ENCODE measurements at regions of chr20 and their contacts with region 1.

Region 1: GRCh38 chr20:13119583-13119982 is 101.5 kb upstream of the ISM1 start:
- DNase-seq: peak in 1 of 2 donors; percentile 40
- ATAC-seq: peak in 6 of 8 donors; percentile 27 to 88 (median 65)
- H3K4me3 ChIP-seq: no peak overlapping the region
- H3K27ac ChIP-seq: no peak overlapping the region
- H3K4me1 ChIP-seq: no peaks in the 10 kb centered on the region
- H3K27me3 ChIP-seq: peaks cover 0 to 4% (median 0%) of the 10 kb centered on the region in 7 donors
- CTCF ChIP-seq: peak; percentile 67 to 92 (median 87)

Region 2: GRCh38 chr20:12956303-12956702 is 163.3 kb before region 1 on chr20:
- intact Hi-C with region 1: no loop called
- DNase-seq: no peak
- ATAC-seq: no peak
- H3K4me3 ChIP-seq: no peak overlapping the region
- H3K27ac ChIP-seq: no peak overlapping the region
- H3K4me1 ChIP-seq: no peaks in the 10 kb centered on the region
- H3K27me3 ChIP-seq: peaks cover 0 to 4% (median 0%) of the 10 kb centered on the region in 7 donors
- CTCF ChIP-seq: no peak

Region 3: DNA sequence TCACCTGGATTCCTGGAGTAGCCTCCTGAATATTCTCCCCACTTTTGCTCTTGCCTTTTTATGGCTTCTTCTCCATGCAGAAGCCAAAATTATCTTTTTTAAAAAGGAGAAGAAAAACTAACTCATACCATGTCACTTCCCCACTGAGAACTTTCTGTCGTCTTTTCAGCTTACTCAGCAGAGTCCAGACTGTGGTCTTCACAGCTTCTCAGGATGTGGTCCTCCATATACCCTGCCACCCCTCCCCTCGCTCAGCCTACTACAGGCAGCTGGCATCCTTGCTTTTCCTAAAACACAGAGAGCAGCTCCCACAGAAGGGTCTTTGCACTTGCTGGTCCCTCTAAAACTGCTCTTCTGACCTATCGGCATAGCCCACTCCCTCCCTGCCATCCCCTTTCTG is 12.1 kb after region 1 on chr20:
- intact Hi-C with region 1: no loop called
- DNase-seq: no peak
- ATAC-seq: peak in 2 of 8 donors; percentile 25 to 53
- H3K4me3 ChIP-seq: no peak overlapping the region
- H3K27ac ChIP-seq: no peak overlapping the region
- H3K4me1 ChIP-seq: no peaks in the 10 kb centered on the region
- H3K27me3 ChIP-seq: no peaks in the 10 kb centered on the region
- CTCF ChIP-seq: no peak

Region 4: DNA sequence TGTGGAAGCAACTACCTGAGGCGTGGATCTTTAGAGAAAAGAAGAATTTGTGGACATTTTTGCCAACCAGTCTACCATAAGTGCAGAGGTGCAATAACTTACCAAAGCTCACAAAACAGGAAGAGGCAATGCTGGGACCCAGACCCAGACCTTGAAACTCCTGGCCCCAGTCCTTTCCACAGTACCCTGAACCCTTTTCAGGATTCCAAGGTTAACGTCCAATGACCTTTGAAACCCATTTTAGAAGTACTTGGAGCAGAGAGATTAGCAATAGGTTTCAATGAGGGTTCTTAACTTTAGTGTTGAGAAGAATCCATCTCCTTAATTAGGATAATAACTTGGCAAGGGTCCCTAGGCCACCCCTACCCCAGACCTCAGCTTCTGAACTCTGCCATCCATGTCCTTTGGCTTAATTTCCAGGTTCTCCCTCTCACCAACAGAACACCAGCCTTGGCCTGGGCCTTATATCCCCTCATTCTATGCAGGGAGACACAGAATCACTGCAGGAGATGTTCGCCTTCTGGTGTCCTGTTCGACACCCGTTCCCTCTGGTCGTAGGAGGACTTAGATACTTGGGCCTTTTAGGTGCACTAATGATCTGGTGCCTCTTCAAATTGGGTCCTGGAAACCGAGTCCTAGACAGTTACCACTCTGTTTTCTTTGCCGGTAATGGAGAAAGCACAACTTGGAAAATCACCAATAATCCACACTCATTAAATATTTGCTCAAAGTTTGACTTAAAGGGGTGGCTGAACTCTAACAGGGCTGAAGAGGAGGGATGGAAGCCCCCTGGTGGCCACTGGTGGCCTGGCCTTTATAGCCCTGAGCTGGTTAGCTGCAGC is 142.1 kb after region 1 on chr20:
- intact Hi-C with region 1: loop called in 8 of 10 experiments (anchors 5 to 10 kb)
- DNase-seq: peak; percentile 40 to 46
- ATAC-seq: peak in 7 of 8 donors; percentile 69 to 93 (median 77)
- H3K4me3 ChIP-seq: no peak overlapping the region
- H3K27ac ChIP-seq: no peak overlapping the region
- H3K4me1 ChIP-seq: peaks cover 0 to 4% (median 0%) of the 10 kb centered on the region in 9 donors
- H3K27me3 ChIP-seq: no peaks in the 10 kb centered on the region
- CTCF ChIP-seq: peak; percentile 44 to 78 (median 71)

Region 5: GRCh38 chr20:13302647-13303450 is 183.3 kb after region 1 on chr20:
- intact Hi-C with region 1: loop called in 8 of 10 experiments (anchors 2 to 10 kb)
- DNase-seq: no peak
- ATAC-seq: peak in 5 of 8 donors; percentile 41 to 61 (median 50)
- H3K4me3 ChIP-seq: no peak overlapping the region
- H3K27ac ChIP-seq: no peak overlapping the region
- H3K4me1 ChIP-seq: no peaks in the 10 kb centered on the region
- H3K27me3 ChIP-seq: no peaks in the 10 kb centered on the region
- CTCF ChIP-seq: peak; percentile 44 to 70 (median 59)

Region 6: DNA sequence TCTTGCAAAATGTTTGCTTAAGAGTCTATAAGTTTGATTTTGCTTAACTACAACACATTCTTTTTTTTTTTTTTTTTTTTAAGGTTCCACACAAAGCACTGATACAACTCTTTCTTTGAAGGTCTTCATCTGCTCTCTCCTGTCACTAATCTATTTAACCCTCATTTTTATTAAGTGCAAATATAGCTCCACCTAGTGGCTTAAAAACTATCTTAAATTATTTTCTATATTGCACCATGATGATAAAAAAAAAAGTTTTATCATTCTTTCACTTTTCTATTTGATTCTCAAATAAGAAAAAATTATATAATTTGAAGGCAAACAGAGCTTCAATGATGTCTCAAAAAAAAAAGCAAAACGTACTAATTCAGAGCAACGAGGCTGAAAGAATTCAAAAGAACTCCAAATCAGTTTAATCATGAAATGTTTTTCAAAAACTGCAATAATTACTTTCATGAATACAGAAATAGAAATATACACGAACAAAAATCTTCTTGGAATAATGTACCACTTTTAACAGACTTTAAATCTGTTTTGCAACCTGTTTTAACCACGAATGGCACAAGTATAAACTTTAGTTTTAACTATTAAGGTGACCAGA is 652.4 kb after region 1 on chr20:
- intact Hi-C with region 1: loop called in 5 of 10 experiments (anchors 5 to 10 kb)
- DNase-seq: no peak
- ATAC-seq: no peak
- H3K4me3 ChIP-seq: no peak overlapping the region
- H3K27ac ChIP-seq: no peak overlapping the region
- H3K4me1 ChIP-seq: no peaks in the 10 kb centered on the region
- H3K27me3 ChIP-seq: no peaks in the 10 kb centered on the region
- CTCF ChIP-seq: peak; percentile 13 to 70 (median 58)

Region 7: DNA sequence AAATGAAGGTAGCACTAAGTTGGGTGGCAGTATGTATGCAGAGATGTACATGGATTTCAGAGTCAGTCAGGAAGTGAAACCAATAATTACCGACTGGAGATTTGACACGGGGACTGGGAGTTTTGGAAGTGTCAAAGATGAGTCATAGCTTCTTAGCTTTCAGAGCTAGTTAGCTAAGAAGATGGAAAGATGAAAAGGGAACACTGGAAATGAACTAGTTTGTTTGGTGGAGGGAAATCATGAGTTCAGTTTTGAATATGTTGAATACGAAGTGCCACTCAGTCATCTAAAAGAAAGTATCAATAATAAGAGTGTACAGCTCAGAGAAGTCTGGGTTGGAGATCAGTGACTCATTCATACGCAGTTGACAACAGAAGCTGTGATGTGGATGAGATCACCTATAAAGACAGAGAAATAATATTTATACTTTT is 657.6 kb after region 1 on chr20:
- intact Hi-C with region 1: loop called in 5 of 10 experiments (anchors 5 to 10 kb)
- DNase-seq: no peak
- ATAC-seq: no peak
- H3K4me3 ChIP-seq: no peak overlapping the region
- H3K27ac ChIP-seq: no peak overlapping the region
- H3K4me1 ChIP-seq: no peaks in the 10 kb centered on the region
- H3K27me3 ChIP-seq: no peaks in the 10 kb centered on the region
- CTCF ChIP-seq: no peak

Region 8: DNA sequence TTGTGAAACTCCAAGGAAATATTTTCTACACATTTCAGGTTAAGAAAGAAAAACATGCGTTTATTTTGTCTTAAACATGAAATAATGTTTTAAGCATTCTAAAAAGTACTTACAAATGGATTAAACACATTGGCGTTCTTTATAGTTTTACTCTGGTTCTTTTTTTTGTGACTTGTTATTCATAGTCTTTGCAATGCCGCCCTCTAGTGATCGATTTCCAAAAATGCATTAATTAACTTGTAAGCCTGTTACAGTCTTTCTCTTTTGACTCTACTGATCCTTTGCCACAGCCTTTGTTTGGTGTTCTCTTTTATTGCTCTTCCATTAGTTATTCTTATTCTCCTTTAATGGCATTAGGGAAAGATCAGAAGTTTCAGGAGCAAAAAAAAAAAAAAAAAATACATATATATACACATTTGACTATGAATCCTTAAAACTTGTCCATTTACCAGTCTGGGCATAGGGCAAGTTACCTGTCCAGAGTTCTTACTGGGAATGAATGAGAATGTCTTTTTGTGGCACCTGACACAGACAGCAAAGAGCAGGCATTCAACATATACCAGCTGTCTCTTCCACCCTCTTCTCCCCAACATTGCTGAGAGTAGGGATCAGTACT is 935.7 kb after region 1 on chr20:
- intact Hi-C with region 1: loop called in 1 of 10 experiments (anchors 10 kb)
- DNase-seq: peak in 1 of 2 donors; percentile 30
- ATAC-seq: no peak
- H3K4me3 ChIP-seq: no peak overlapping the region
- H3K27ac ChIP-seq: no peak overlapping the region
- H3K4me1 ChIP-seq: no peaks in the 10 kb centered on the region
- H3K27me3 ChIP-seq: no peaks in the 10 kb centered on the region
- CTCF ChIP-seq: peak in 8 of 9 donors; percentile 31 to 75 (median 67)

Measured in heart right ventricle (tissue), 16 donors.